Activated naive CD4-positive, alpha-beta T cell treated with anti-CD3 and anti-CD28 coated beads for 36 hours (primary cell): ENCODE measurements at regions of chr2 and their contacts with region 1.

Region 1: GRCh38 chr2:54704688-54705605 is 18.5 kb upstream of the EML6 start:
- DNase-seq: no peak
- H3K4me3 Mint-ChIP-seq: no peak overlapping the region
- H3K27ac Mint-ChIP-seq: no peak overlapping the region
- H3K4me1 Mint-ChIP-seq: peaks cover 12% of the 10 kb centered on the region
- H3K27me3 Mint-ChIP-seq: peaks cover 14% of the 10 kb centered on the region

Region 2: GRCh38 chr2:54115284-54116137 is 589.4 kb before region 1 on chr2 and contains the start of gene ACYP2:
- CTCF ChIA-PET with region 1: interaction called, 5 read pairs
- intact Hi-C with region 1: loop called (anchors 2 kb)
- DNase-seq: peak; percentile 95
- H3K4me3 Mint-ChIP-seq: peak within 1 kb of the TSS; percentile 97
- H3K27ac Mint-ChIP-seq: peak within 1 kb of the TSS; percentile 100
- H3K4me1 Mint-ChIP-seq: peaks cover 11% of the 10 kb centered on the region
- H3K27me3 Mint-ChIP-seq: no peaks in the 10 kb centered on the region
- total RNA-seq, gene ACYP2: 6.8 to 7.3 TPM

Region 3: DNA sequence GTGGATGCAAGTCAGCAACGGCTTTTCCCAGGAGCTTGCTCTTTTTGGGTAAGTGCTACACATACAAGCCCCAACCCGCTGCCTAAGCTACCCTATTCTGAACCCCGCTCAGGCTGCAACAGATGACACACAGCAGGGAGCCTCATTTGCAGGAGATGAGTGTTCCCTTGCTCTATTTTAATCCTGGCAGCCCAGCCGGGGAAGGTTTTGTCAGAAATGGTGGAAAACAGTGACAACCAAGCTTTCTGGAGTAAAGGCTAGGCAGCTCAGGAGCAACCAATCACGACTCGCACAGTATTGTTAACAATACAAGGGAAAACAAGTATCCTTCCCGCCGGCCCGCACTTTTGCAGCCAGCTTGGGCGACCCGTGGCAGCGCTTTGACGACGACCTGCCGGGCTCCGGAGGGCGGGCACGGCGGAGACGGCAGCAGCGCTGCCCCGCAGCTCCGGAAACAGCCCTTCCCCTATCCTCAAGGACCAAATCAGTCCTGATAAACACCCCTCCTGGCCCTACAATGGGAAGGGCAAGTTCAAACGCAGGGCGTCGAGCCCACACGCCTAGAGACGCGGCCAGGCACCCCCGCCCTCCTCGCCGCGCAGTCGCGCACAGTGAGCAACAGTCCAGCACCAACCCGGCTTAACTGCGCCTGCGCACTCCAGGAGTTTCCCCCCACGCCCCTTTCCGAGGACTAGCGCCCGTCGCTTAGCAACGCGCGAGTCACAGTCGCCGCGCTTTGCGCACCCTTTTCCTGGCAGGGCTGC is 374.6 kb before region 1 on chr2:
- CTCF ChIA-PET with region 1: no interaction called
- intact Hi-C with region 1: loop called (anchors 5 kb)
- DNase-seq: peak; percentile 93
- H3K4me3 Mint-ChIP-seq: peak overlapping the region; percentile 83
- H3K27ac Mint-ChIP-seq: no peak overlapping the region
- H3K4me1 Mint-ChIP-seq: peaks cover 17% of the 10 kb centered on the region
- H3K27me3 Mint-ChIP-seq: peaks cover 6% of the 10 kb centered on the region

Region 4: GRCh38 chr2:54657664-54658083 is 47.3 kb before region 1 on chr2:
- CTCF ChIA-PET with region 1: interaction called, 46 read pairs
- intact Hi-C with region 1: no loop called
- DNase-seq: peak; percentile 58
- H3K4me3 Mint-ChIP-seq: no peak overlapping the region
- H3K27ac Mint-ChIP-seq: peak overlapping the region; percentile 60
- H3K4me1 Mint-ChIP-seq: peaks cover 18% of the 10 kb centered on the region
- H3K27me3 Mint-ChIP-seq: no peaks in the 10 kb centered on the region

Region 5: DNA sequence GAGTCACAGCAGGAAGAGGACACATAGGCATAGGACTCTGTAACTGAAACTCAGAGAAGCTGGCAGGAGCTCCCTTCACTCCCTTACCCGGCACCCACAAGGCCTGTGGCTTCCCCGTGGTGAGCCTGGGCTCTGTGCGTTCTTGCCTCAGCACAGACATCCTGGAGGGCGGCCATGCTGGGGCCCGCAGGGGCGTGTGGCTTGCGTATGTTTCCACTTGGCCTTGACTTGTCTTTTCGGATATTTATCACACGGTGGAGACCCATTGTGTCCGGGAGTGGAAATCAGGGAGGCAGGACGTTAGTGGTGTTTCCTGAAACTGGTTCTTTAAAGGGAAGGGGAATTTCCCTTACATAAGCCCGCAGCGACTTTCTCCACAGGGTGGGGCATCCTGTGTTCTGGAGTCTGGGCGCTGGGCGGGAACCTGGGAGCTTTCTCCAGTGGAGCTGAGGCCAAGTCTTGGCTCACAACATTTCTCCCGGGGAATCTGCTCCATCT is 31.4 kb before region 1 on chr2:
- CTCF ChIA-PET with region 1: interaction called, 17 read pairs
- intact Hi-C with region 1: loop called (anchors 2 kb)
- DNase-seq: peak; percentile 85
- H3K4me3 Mint-ChIP-seq: peak overlapping the region; percentile 18
- H3K27ac Mint-ChIP-seq: no peak overlapping the region
- H3K4me1 Mint-ChIP-seq: peaks cover 19% of the 10 kb centered on the region
- H3K27me3 Mint-ChIP-seq: peaks cover 26% of the 10 kb centered on the region

Region 6: DNA sequence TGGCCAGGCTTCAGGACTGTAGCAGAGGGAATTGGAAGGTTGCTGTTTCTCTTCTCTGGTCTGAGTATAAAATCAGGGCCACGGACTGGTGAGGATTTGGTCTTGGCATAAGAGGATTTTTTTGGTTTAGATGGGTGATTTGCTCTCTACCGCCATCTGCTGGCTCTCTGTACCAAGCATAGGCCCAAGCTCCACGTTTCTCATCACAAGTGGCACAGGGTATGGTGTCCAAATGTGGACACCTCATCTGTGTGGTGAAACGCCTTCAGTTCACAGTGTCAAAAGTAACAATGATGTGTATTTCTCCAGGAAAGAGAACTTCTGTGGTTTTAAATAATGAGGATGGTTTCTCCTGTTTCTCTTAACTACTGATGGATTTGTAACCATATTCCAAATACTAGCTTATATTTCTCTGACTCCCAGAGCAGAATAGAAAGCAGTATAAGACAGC is 133.7 kb after region 1 on chr2:
- CTCF ChIA-PET with region 1: interaction called, 14 read pairs
- intact Hi-C with region 1: loop called (anchors 1 kb)
- DNase-seq: peak; percentile 80
- H3K4me3 Mint-ChIP-seq: no peak overlapping the region
- H3K27ac Mint-ChIP-seq: no peak overlapping the region
- H3K4me1 Mint-ChIP-seq: no peaks in the 10 kb centered on the region
- H3K27me3 Mint-ChIP-seq: no peaks in the 10 kb centered on the region

Region 7: GRCh38 chr2:55175254-55176025 is 470.5 kb after region 1 on chr2:
- CTCF ChIA-PET with region 1: no interaction called
- intact Hi-C with region 1: loop called (anchors 2 kb)
- DNase-seq: no peak
- H3K4me3 Mint-ChIP-seq: no peak overlapping the region
- H3K27ac Mint-ChIP-seq: no peak overlapping the region
- H3K4me1 Mint-ChIP-seq: peaks cover 7% of the 10 kb centered on the region
- H3K27me3 Mint-ChIP-seq: no peaks in the 10 kb centered on the region